ENCODE measurements at regions of chr3 and their contacts with region 1.

Region 1: GRCh38 chr3:42961633-42962032 is 17.5 kb upstream of the GASK1A start:
- DNase-seq: peak; percentile 41
- ATAC-seq: peak; percentile 81
- H3K4me3 ChIP-seq: no peak overlapping the region
- H3K27ac ChIP-seq: no peak overlapping the region
- H3K4me1 ChIP-seq: no peaks in the 10 kb centered on the region
- H3K27me3 ChIP-seq: peaks cover 14% of the 10 kb centered on the region; the same call in 1 of the 2 replicates
- CTCF ChIP-seq: peak; percentile 62 to 74 (median 69); a peak in 5 of 6 replicates
- POLR2A ChIP-seq: no peak
- RAD21 ChIP-seq: peak; percentile 84

Region 2: GRCh38 chr3:42790714-42791229 is 170.9 kb before region 1 on chr3:
- CTCF ChIA-PET with region 1: no interaction called
- POLR2A ChIA-PET with region 1: no interaction called
- RAD21 ChIA-PET with region 1: no interaction called
- intact Hi-C with region 1: no loop called
- DNase-seq: no peak
- ATAC-seq: no peak
- H3K4me3 ChIP-seq: no peak overlapping the region
- H3K27ac ChIP-seq: no peak overlapping the region
- H3K4me1 ChIP-seq: no peaks in the 10 kb centered on the region
- H3K27me3 ChIP-seq: no peaks in the 10 kb centered on the region
- CTCF ChIP-seq: no peak
- POLR2A ChIP-seq: no peak
- RAD21 ChIP-seq: no peak

Region 3: GRCh38 chr3:42906070-42906847 is 55.4 kb before region 1 on chr3 and contains the start of gene ZNF662:
- CTCF ChIA-PET with region 1: no interaction called
- POLR2A ChIA-PET with region 1: no interaction called
- RAD21 ChIA-PET with region 1: no interaction called
- intact Hi-C with region 1: no loop called
- DNase-seq: no peak
- ATAC-seq: no peak
- H3K4me3 ChIP-seq: no peak within 1 kb of the TSS
- H3K27ac ChIP-seq: no peak within 1 kb of the TSS
- H3K4me1 ChIP-seq: no peaks in the 10 kb centered on the region
- H3K27me3 ChIP-seq: no peaks in the 10 kb centered on the region
- CTCF ChIP-seq: no peak
- POLR2A ChIP-seq: no peak
- RAD21 ChIP-seq: no peak
- total RNA-seq, gene ZNF662: not detected

Region 4: DNA sequence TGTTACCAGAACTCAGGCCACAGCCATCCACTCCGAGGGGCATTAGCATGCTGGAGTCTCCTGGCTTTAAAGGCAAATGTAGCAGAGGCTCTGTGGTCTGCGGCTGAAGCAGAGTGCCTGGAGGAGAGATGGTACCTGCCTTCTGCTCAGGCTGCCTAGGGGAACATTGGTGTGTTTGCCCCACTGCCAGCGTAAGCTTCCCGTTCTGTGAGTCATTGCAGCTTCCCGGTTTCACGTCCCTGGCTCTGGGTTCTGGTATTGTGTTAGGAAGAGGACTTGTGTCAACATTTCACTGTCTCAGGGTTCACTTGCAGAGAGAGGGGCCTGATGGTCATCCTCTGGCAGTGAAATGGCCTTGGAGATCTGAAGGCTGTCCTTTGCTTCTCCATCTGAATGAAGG is 19.3 kb after region 1 on chr3:
- CTCF ChIA-PET with region 1: interaction called, 12 read pairs
- POLR2A ChIA-PET with region 1: no interaction called
- RAD21 ChIA-PET with region 1: no interaction called
- intact Hi-C with region 1: no loop called
- DNase-seq: no peak
- ATAC-seq: no peak
- H3K4me3 ChIP-seq: no peak overlapping the region
- H3K27ac ChIP-seq: no peak overlapping the region
- H3K4me1 ChIP-seq: peaks cover 0 to 12% of the 10 kb centered on the region in 2 experiments; a peak in 1 of 4 replicates
- H3K27me3 ChIP-seq: no peaks in the 10 kb centered on the region
- CTCF ChIP-seq: no peak
- POLR2A ChIP-seq: no peak
- RAD21 ChIP-seq: no peak

Region 5: DNA sequence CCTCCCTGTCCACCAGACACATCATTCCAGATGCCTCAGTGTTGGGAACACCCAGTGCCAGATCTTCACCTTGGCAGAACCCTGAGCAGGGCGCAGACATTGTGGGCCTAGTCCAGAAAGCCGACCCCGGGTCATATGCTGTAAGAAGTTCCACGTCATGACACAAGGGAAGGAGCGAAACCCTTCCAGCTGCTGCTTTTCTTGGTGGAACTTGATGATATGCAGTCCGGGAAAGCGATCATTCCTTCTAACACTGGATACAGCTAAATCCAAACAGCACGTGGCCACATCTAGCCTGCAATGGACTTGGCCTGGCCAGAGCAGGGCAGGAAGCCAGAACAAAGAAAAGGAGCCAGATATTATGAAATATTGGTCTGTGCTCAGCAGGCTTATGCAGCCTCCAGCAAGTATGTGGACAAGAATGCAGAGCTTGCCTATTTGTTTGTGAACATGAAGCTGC is 39.5 kb after region 1 on chr3:
- CTCF ChIA-PET with region 1: no interaction called
- POLR2A ChIA-PET with region 1: no interaction called
- RAD21 ChIA-PET with region 1: no interaction called
- intact Hi-C with region 1: no loop called
- DNase-seq: no peak
- ATAC-seq: no peak
- H3K4me3 ChIP-seq: no peak overlapping the region
- H3K27ac ChIP-seq: no peak overlapping the region
- H3K4me1 ChIP-seq: peaks cover 0 to 15% of the 10 kb centered on the region in 2 experiments; a peak in 2 of 4 replicates
- H3K27me3 ChIP-seq: no peaks in the 10 kb centered on the region
- CTCF ChIP-seq: no peak
- POLR2A ChIP-seq: no peak
- RAD21 ChIP-seq: no peak

Region 6: GRCh38 chr3:43087249-43087776 is 125.7 kb after region 1 on chr3:
- CTCF ChIA-PET with region 1: interaction called, 27 read pairs
- POLR2A ChIA-PET with region 1: no interaction called
- RAD21 ChIA-PET with region 1: interaction called in 1 of 2 experiments, 4 read pairs
- intact Hi-C with region 1: no loop called
- DNase-seq: no peak
- ATAC-seq: peak; percentile 58
- H3K4me3 ChIP-seq: no peak overlapping the region
- H3K27ac ChIP-seq: no peak overlapping the region
- H3K4me1 ChIP-seq: no peaks in the 10 kb centered on the region
- H3K27me3 ChIP-seq: no peaks in the 10 kb centered on the region
- CTCF ChIP-seq: peak in 2 of 3 experiments; percentile 25 to 38; a peak in 3 of 6 replicates
- POLR2A ChIP-seq: no peak
- RAD21 ChIP-seq: peak; percentile 39

Region 7: GRCh38 chr3:43223670-43224364 is 262.2 kb after region 1 on chr3:
- CTCF ChIA-PET with region 1: interaction called, 15 read pairs
- POLR2A ChIA-PET with region 1: no interaction called
- RAD21 ChIA-PET with region 1: no interaction called
- intact Hi-C with region 1: no loop called
- DNase-seq: no peak
- ATAC-seq: no peak
- H3K4me3 ChIP-seq: no peak overlapping the region
- H3K27ac ChIP-seq: no peak overlapping the region
- H3K4me1 ChIP-seq: no peaks in the 10 kb centered on the region
- H3K27me3 ChIP-seq: no peaks in the 10 kb centered on the region
- CTCF ChIP-seq: peak; percentile 22 to 52 (median 49); a peak in 3 of 6 replicates
- POLR2A ChIP-seq: no peak
- RAD21 ChIP-seq: peak; percentile 67

Region 8: GRCh38 chr3:43503067-43503728 is 541.6 kb after region 1 on chr3:
- CTCF ChIA-PET with region 1: interaction called, 10 read pairs
- POLR2A ChIA-PET with region 1: no interaction called
- RAD21 ChIA-PET with region 1: interaction called, 3 to 7 read pairs
- intact Hi-C with region 1: loop called (anchors 5 kb)
- DNase-seq: peak; percentile 12
- ATAC-seq: peak; percentile 72
- H3K4me3 ChIP-seq: no peak overlapping the region
- H3K27ac ChIP-seq: no peak overlapping the region
- H3K4me1 ChIP-seq: no peaks in the 10 kb centered on the region
- H3K27me3 ChIP-seq: no peaks in the 10 kb centered on the region
- CTCF ChIP-seq: peak; percentile 39 to 65 (median 56); a peak in 4 of 6 replicates
- POLR2A ChIP-seq: no peak
- RAD21 ChIP-seq: peak; percentile 68